Transverse colon (tissue), 4 donors: ENCODE measurements at regions of chr6 and their contacts with region 1.

Region 1: DNA sequence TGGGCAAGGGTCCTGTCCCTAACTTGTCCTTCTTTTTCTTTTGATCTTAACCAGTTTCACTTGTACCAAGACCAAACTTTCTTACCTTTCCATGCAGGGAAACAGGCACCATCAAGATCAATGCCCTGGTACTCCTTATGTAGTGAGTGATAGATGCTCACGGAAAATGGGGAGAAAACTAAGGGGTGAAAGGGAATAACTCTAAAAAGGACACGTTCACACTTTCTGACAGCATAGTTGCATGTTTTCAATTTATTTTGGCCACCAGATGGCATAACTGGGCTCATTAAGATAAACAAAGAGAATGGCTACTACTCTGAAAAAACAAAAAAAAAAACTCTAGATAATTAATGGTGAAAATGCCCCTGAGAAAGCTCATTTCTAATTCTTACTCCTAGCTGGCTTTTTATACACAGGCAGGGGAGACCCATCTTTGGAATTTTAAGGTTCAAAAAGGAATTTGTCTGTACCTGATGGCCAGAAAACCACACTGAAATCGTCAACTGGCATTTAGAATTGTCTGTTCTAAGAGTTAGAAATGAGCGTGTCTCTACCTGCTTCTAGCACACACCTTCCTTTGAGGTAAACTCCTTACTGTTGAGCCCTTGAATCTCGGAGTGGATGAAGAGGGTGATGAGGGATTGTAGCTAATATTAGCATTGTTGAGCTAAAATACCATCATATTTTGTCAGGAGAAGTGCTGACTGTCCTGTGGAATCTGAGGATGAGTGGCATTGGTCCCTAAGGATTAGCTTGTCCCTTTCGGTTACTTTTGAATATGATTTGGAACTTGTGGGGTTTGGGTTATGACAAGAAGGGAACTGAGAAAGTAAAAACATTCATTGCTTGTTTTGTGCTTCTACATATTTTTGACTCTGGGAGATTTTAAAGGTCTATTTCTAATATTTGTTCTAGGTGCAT is 62.2 kb upstream of the DDR1 start:
- DNase-seq: no peak
- H3K4me3 ChIP-seq: no peak overlapping the region
- H3K27ac ChIP-seq: peak overlapping the region in 2 of 4 donors; percentile 62 to 70
- H3K4me1 ChIP-seq: peaks cover 15 to 61% (median 27%) of the 10 kb centered on the region in 4 donors
- H3K27me3 ChIP-seq: no peaks in the 10 kb centered on the region
- CTCF ChIP-seq: peak; percentile 40 to 68 (median 50)
- EP300 ChIP-seq: no peak
- POLR2A ChIP-seq: no peak

Region 2: DNA sequence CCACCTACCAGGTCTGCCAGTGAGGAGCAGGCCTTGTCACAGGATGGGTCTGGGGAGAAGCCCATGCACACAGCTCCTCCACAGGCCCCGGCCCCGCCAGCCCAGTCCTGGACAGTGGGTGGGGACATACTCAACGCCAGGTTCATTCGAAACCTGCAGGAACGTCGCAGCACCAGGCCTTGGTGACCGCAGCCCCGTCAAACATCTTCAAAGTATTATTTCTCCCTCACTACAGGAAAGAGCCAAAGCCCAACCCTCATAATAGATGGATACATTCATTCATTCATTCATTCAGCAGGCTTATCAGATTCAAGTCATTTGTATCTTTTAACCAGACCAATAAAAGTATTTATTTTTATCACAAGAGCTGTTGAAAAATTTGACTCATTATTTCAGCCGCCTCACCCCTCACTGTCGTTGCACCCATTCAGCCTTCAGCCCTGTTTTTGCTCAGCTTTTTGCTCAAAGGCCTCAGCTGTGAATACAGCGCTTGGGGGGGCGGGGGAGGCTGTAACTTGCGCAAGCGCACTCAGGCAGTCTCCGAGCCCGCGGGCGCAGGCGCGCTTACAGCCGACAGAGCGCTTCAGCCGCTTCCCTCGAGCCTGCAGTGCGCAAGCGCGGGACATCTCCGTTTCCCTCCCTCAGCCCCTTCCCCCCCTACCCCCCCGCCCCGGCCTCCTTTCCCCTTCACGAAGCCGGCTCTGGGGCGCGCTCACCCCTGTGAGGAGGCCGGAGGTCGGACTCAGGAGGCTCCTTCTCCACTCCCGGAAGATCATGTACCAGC is 175.5 kb before region 1 on chr6 and contains the start of gene C6orf136:
- in situ Hi-C with region 1: no loop called
- intact Hi-C with region 1: no loop called
- DNase-seq: peak; percentile 96
- H3K4me3 ChIP-seq: peak within 1 kb of the TSS; percentile 56 to 93 (median 82)
- H3K27ac ChIP-seq: peak within 1 kb of the TSS; percentile 93 to 98 (median 97)
- H3K4me1 ChIP-seq: peaks cover 13 to 38% (median 25%) of the 10 kb centered on the region in 4 donors
- H3K27me3 ChIP-seq: no peaks in the 10 kb centered on the region
- CTCF ChIP-seq: no peak
- EP300 ChIP-seq: no peak
- POLR2A ChIP-seq: no peak
- total RNA-seq, gene C6orf136: 49.1 to 301 (median 63.5) TPM

Region 3: GRCh38 chr6:31037682-31038081 is 215.6 kb after region 1 on chr6:
- in situ Hi-C with region 1: no loop called
- intact Hi-C with region 1: no loop called
- DNase-seq: no peak
- H3K4me3 ChIP-seq: no peak overlapping the region
- H3K27ac ChIP-seq: no peak overlapping the region
- H3K4me1 ChIP-seq: no peaks in the 10 kb centered on the region
- H3K27me3 ChIP-seq: no peaks in the 10 kb centered on the region
- CTCF ChIP-seq: no peak
- EP300 ChIP-seq: no peak
- POLR2A ChIP-seq: no peak

Region 4: GRCh38 chr6:31118178-31118577 is 296.1 kb after region 1 on chr6:
- in situ Hi-C with region 1: no loop called
- intact Hi-C with region 1: loop called (anchors 2 kb)
- DNase-seq: no peak
- H3K4me3 ChIP-seq: no peak overlapping the region
- H3K27ac ChIP-seq: no peak overlapping the region
- H3K4me1 ChIP-seq: peaks cover 12 to 28% (median 22%) of the 10 kb centered on the region in 4 donors
- H3K27me3 ChIP-seq: no peaks in the 10 kb centered on the region
- CTCF ChIP-seq: no peak
- EP300 ChIP-seq: no peak
- POLR2A ChIP-seq: no peak